H1 (cell line): ENCODE measurements at regions of chr11 and their contacts with region 1.

Region 1: DNA sequence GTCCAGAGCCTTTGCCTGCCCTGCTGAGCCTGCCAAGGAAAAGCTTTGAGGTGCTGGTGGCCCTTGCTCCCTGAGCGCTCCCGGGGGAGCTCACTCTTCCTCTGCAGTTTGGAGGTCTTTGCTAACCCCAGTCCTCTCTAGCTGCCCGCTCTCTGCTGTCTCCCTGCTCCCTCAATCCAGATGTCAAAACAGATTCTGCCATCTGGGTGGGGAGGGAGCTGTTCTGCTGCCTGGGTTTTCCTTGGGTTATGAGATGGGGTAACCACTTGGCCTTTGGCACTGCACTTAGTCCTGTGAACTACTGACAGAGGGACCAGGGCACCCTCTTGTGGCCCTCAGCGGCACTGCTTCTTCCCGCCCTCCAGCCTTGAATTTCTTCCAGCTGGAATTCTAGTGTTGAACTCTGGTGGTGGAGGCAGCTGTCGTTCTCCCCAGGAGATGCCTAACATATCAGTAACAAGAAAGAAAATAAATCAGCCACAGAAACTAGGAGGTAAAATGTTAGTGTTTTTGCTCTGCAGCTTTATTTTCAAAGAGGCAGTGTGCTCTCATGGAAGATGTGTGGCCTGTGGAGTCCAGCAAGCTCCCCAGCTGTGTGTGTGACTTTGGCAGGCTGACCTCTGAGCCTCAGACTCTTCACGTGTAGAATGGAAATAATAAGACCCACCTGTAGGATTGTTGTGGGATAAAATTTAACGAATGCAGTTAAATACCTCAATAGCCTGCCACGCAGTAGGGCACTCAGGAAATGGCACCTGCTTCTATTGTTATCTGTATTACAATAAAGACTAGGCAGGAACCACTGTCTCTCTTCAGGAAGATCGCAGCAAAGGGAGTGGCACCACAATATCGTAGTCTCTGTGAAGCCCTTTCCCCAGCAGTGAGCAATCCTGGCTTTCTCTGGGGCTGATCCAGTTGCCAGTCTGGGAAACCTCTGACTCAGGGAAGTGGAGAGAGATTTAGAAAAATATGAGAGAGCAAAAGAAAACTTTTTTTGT is 23.4 kb downstream of the ARFGAP2 start:
- DNase-seq: peak in 1 of 2 experiments; percentile 97
- H3K4me3 ChIP-seq: no peak overlapping the region
- H3K27ac ChIP-seq: no peak overlapping the region
- H3K4me1 ChIP-seq: peaks cover 0 to 4% (median 2%) of the 10 kb centered on the region in 4 experiments; a peak in 4 of 7 replicates
- H3K27me3 ChIP-seq: no peaks in the 10 kb centered on the region
- CTCF ChIP-seq: peak; percentile 95 to 100 (median 99)
- EP300 ChIP-seq: no peak
- POLR2A ChIP-seq: no peak
- RAD21 ChIP-seq: peak; percentile 99

Region 2: DNA sequence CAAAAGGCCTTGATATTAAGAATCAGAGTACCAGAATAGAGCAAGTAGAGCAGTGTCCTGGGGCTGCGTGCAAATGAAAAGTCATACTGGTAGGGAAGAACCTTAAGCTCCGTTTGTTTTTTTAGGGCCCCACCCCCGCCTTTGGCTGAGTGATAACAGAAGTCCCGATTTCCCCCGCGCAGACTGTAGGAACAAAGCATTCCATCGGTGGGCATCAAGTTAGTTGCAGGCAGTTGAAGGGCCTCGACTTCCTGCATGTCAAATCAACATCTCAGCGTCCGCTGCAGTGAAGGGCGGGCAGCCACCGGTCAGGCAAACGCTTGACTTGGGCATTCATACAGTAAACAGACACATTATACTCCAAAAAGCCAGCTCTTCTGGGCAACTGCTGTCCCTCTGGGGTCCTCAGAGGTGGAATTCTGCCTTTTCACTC is 246.6 kb before region 1 on chr11:
- CTCF ChIA-PET with region 1: interaction called, 81 read pairs
- POLR2A ChIA-PET with region 1: no interaction called
- DNase-seq: peak; percentile 41 to 62
- H3K4me3 ChIP-seq: 0 out of 8 replicates have a peak overlapping the region, but pooled peaks of 2 of the 4 experiments have one; percentile 6 to 16
- H3K27ac ChIP-seq: no peak overlapping the region; the same call in 1 of the 2 replicates
- H3K4me1 ChIP-seq: peaks cover 13 to 27% (median 21%) of the 10 kb centered on the region in 4 experiments
- H3K27me3 ChIP-seq: no peaks in the 10 kb centered on the region
- CTCF ChIP-seq: no peak
- EP300 ChIP-seq: no peak
- POLR2A ChIP-seq: no peak
- RAD21 ChIP-seq: no peak

Region 3: GRCh38 chr11:46987183-46987582 is 166.1 kb before region 1 on chr11:
- CTCF ChIA-PET with region 1: interaction called, 39 read pairs
- POLR2A ChIA-PET with region 1: no interaction called
- DNase-seq: no peak
- H3K4me3 ChIP-seq: no peak overlapping the region
- H3K27ac ChIP-seq: no peak overlapping the region
- H3K4me1 ChIP-seq: peaks cover 0 to 2% (median 0%) of the 10 kb centered on the region in 4 experiments; a peak in 1 of 7 replicates
- H3K27me3 ChIP-seq: no peaks in the 10 kb centered on the region
- CTCF ChIP-seq: peak in 2 of 3 experiments; percentile 45 to 55; a peak in 3 of 4 replicates
- EP300 ChIP-seq: no peak
- POLR2A ChIP-seq: no peak
- RAD21 ChIP-seq: peak; percentile 52 to 65

Region 4: GRCh38 chr11:47071791-47072261 is 81.4 kb before region 1 on chr11:
- CTCF ChIA-PET with region 1: interaction called, 15 read pairs
- POLR2A ChIA-PET with region 1: no interaction called
- DNase-seq: no peak
- H3K4me3 ChIP-seq: no peak overlapping the region
- H3K27ac ChIP-seq: no peak overlapping the region
- H3K4me1 ChIP-seq: peaks cover 0 to 3% (median 0%) of the 10 kb centered on the region in 4 experiments; a peak in 2 of 7 replicates
- H3K27me3 ChIP-seq: no peaks in the 10 kb centered on the region
- CTCF ChIP-seq: no peak
- EP300 ChIP-seq: no peak
- POLR2A ChIP-seq: no peak
- RAD21 ChIP-seq: no peak

Region 5: DNA sequence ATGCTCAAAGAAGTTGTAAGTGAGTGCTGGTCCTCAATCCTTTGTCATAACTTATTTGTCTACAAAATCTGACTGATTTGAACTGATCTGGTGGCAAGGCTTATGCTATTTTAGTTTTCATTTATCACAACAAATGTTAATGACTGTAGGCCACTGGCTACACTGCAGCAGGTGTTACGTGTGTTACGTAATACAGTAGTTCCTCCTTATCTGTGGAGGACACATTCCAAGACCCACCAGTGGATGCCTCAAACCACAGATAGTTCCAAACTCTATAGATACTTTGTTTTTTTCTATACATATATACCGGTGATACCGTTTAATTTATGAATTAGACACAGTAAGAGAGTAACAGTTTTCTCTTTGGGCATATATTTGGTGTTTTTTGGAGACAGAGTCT is 123.7 kb after region 1 on chr11:
- CTCF ChIA-PET with region 1: no interaction called
- POLR2A ChIA-PET with region 1: no interaction called
- DNase-seq: no peak
- H3K4me3 ChIP-seq: no peak overlapping the region
- H3K27ac ChIP-seq: no peak overlapping the region
- H3K4me1 ChIP-seq: peaks cover 0 to 7% (median under 1%) of the 10 kb centered on the region in 4 experiments; a peak in 2 of 7 replicates
- H3K27me3 ChIP-seq: no peaks in the 10 kb centered on the region
- CTCF ChIP-seq: no peak
- EP300 ChIP-seq: no peak
- POLR2A ChIP-seq: no peak
- RAD21 ChIP-seq: no peak